CD8-positive, alpha-beta T cell (primary cell): ENCODE measurements at regions of chr11 and their contacts with region 1.

Region 1: GRCh38 chr11:96342961-96343711 is at the start of gene MAML2:
- DNase-seq: peak; percentile 82 to 97 (median 89)
- ATAC-seq: peak; percentile 85
- H3K4me3 ChIP-seq: peak within 1 kb of the TSS; percentile 88 to 98
- H3K4me3 Mint-ChIP-seq: peak within 1 kb of the TSS; percentile 98
- H3K27ac ChIP-seq: peak within 1 kb of the TSS; percentile 66 to 83
- H3K27ac Mint-ChIP-seq: peak within 1 kb of the TSS; percentile 91
- H3K4me1 ChIP-seq: peaks cover 16% of the 10 kb centered on the region
- H3K4me1 Mint-ChIP-seq: peaks cover 39% of the 10 kb centered on the region
- H3K27me3 ChIP-seq: no peaks in the 10 kb centered on the region
- H3K27me3 Mint-ChIP-seq: no peaks in the 10 kb centered on the region
- CTCF ChIP-seq: peak; percentile 88
- total RNA-seq, gene MAML2: 41.2 to 42.3 TPM

Region 2: GRCh38 chr11:96054870-96055705 is 288.0 kb before region 1 on chr11:
- CTCF ChIA-PET with region 1: interaction called, 98 read pairs
- POLR2A ChIA-PET with region 1: interaction called, 24 read pairs
- intact Hi-C with region 1: loop called (anchors 1 to 2 kb)
- DNase-seq: peak in 2 of 9 experiments; percentile 43 to 58
- ATAC-seq: peak; percentile 59
- H3K4me3 ChIP-seq: no peak overlapping the region
- H3K4me3 Mint-ChIP-seq: no peak overlapping the region
- H3K27ac ChIP-seq: no peak overlapping the region
- H3K27ac Mint-ChIP-seq: peak overlapping the region; percentile 58
- H3K4me1 ChIP-seq: peaks cover 16% of the 10 kb centered on the region
- H3K4me1 Mint-ChIP-seq: peaks cover 57% of the 10 kb centered on the region
- H3K27me3 ChIP-seq: no peaks in the 10 kb centered on the region
- H3K27me3 Mint-ChIP-seq: no peaks in the 10 kb centered on the region
- CTCF ChIP-seq: peak; percentile 67

Region 3: DNA sequence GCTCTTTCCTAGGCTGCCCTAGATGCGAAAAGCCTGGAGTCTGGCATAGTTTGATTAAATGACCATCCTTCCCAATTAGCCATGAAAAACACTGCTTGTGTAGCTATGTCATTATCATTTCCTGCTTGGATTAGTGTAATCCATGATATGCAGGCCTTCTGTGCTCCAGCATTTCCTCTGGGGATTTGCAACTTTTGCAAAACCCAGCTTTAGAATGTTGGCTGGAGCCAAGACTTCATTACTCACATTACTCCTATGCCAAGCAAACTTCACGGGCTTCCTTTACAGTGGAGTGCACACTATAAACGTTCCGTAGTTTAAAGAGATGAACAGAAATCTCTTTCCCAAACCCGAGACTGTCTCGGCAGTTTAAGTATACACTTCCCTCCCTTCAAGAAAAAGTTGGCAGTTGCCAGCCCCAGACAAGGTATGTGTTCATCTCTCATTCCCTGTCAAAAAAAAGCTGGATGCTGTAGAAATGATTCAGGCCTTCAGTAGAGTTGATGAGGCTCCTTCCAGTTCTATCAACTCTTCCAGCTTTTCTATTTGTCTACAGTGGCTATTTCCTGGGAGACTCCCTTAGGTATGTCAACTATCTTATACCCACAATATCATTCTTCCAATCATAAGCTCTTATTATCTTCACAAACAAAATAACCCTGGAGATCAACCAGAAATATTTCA is 180.2 kb before region 1 on chr11:
- CTCF ChIA-PET with region 1: interaction called, 10 read pairs
- POLR2A ChIA-PET with region 1: no interaction called
- intact Hi-C with region 1: no loop called
- DNase-seq: no peak
- ATAC-seq: no peak
- H3K4me3 ChIP-seq: no peak overlapping the region
- H3K4me3 Mint-ChIP-seq: no peak overlapping the region
- H3K27ac ChIP-seq: no peak overlapping the region
- H3K27ac Mint-ChIP-seq: peak overlapping the region; percentile 5
- H3K4me1 ChIP-seq: peaks cover 34% of the 10 kb centered on the region
- H3K4me1 Mint-ChIP-seq: peaks cover 70% of the 10 kb centered on the region
- H3K27me3 ChIP-seq: no peaks in the 10 kb centered on the region
- H3K27me3 Mint-ChIP-seq: no peaks in the 10 kb centered on the region
- CTCF ChIP-seq: no peak

Region 4: GRCh38 chr11:96235751-96236150 is 107.4 kb before region 1 on chr11:
- CTCF ChIA-PET with region 1: interaction called, 48 read pairs
- POLR2A ChIA-PET with region 1: no interaction called
- intact Hi-C with region 1: no loop called
- DNase-seq: no peak
- ATAC-seq: peak; percentile 40
- H3K4me3 ChIP-seq: no peak overlapping the region
- H3K4me3 Mint-ChIP-seq: no peak overlapping the region
- H3K27ac ChIP-seq: no peak overlapping the region
- H3K27ac Mint-ChIP-seq: peak overlapping the region; percentile 45
- H3K4me1 ChIP-seq: peaks cover 39% of the 10 kb centered on the region
- H3K4me1 Mint-ChIP-seq: peaks cover 47% of the 10 kb centered on the region
- H3K27me3 ChIP-seq: no peaks in the 10 kb centered on the region
- H3K27me3 Mint-ChIP-seq: no peaks in the 10 kb centered on the region
- CTCF ChIP-seq: no peak

Region 5: GRCh38 chr11:96293598-96294021 is 49.5 kb before region 1 on chr11:
- CTCF ChIA-PET with region 1: interaction called, 5 read pairs
- POLR2A ChIA-PET with region 1: interaction called, 3 read pairs
- intact Hi-C with region 1: loop called in 1 of 2 experiments (anchors 5 kb)
- DNase-seq: peak in 1 of 9 experiments; percentile 45
- ATAC-seq: peak; percentile 31
- H3K4me3 ChIP-seq: no peak overlapping the region
- H3K4me3 Mint-ChIP-seq: peak overlapping the region; percentile 59
- H3K27ac ChIP-seq: peak overlapping the region in 1 of 2 experiments; percentile 24
- H3K27ac Mint-ChIP-seq: peak overlapping the region; percentile 78
- H3K4me1 ChIP-seq: peaks cover 51% of the 10 kb centered on the region
- H3K4me1 Mint-ChIP-seq: peaks cover 81% of the 10 kb centered on the region
- H3K27me3 ChIP-seq: no peaks in the 10 kb centered on the region
- H3K27me3 Mint-ChIP-seq: no peaks in the 10 kb centered on the region
- CTCF ChIP-seq: no peak

Region 6: DNA sequence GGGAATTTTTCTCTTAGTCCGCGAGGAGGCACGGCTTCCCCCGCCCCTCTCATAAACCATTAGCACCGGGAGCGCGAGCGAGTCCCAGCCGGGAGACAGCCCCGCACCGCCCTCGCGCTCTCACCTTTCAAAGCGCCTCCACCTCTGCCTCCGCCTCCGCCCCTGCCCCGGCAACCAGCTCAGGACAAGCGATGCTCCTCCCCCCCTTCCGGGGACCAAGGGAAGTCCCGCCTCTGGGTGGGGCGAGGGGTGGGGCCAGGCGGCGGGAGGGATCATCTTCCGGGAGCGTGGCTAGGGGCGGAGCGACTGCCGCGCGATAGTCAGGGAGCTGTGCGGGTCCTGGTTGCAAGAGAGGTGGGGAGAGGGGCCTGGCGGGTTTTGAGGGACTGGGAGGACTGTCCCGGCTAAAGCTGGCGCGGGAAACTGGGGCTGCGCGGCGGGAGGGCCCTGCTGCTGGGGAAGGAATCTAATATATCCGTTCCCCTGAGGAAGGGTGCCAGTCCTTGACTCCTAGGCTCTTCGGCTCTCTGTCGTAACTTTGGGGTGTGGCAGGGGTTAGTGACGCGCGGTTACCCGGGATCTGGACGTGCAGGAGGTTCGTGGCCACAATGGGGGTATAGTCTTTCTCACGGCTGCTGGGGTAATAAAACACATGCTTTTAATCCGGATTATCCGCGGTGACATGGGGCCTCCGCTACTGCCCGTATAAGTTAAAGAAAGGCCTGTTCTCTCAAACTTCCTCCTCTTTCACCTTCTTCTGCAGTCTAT is 46.8 kb after region 1 on chr11 and contains the starts of genes CCDC82 and JRKL:
- CTCF ChIA-PET with region 1: interaction called, 16 read pairs
- POLR2A ChIA-PET with region 1: no interaction called
- intact Hi-C with region 1: loop called (anchors 1 to 2 kb)
- DNase-seq: peak; percentile 96 to 99 (median 98)
- ATAC-seq: peak; percentile 97
- H3K4me3 ChIP-seq: peak within 1 kb of the TSS; percentile 87 to 93
- H3K4me3 Mint-ChIP-seq: peak within 1 kb of the TSS; percentile 94
- H3K27ac ChIP-seq: peak within 1 kb of the TSS; percentile 78 to 79
- H3K27ac Mint-ChIP-seq: peak within 1 kb of the TSS; percentile 96
- H3K4me1 ChIP-seq: peaks cover 15% of the 10 kb centered on the region
- H3K4me1 Mint-ChIP-seq: peaks cover 52% of the 10 kb centered on the region
- H3K27me3 ChIP-seq: no peaks in the 10 kb centered on the region
- H3K27me3 Mint-ChIP-seq: no peaks in the 10 kb centered on the region
- CTCF ChIP-seq: no peak
- total RNA-seq, gene CCDC82: 20.0 to 23.0 TPM
- total RNA-seq, gene JRKL: 2.5 to 2.6 TPM

Region 7: DNA sequence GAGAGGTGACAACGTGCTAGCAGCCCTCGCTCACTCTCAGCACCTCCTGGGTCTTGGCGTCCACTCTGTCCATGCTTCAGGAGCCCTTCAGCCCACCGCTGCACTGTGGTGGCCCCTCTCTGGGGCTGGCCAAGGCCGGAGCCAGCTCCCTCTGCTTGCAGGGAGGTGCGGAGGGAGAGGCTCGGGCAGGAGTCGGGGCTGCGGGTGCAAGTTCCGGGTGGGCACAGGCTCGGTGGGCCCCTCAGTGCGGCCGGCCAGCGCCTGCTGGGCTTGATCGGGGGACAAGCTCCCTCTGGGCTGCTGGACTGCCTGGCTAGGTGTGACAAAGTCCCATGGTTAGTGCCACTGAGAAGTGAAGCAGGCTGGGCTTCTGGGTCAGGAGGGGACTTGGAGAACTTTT is 292.5 kb after region 1 on chr11:
- CTCF ChIA-PET with region 1: no interaction called
- POLR2A ChIA-PET with region 1: no interaction called
- intact Hi-C with region 1: no loop called
- DNase-seq: no peak
- ATAC-seq: no peak
- H3K4me3 ChIP-seq: no peak overlapping the region
- H3K4me3 Mint-ChIP-seq: no peak overlapping the region
- H3K27ac ChIP-seq: no peak overlapping the region
- H3K27ac Mint-ChIP-seq: no peak overlapping the region
- H3K4me1 ChIP-seq: no peaks in the 10 kb centered on the region
- H3K4me1 Mint-ChIP-seq: no peaks in the 10 kb centered on the region
- H3K27me3 ChIP-seq: no peaks in the 10 kb centered on the region
- H3K27me3 Mint-ChIP-seq: no peaks in the 10 kb centered on the region
- CTCF ChIP-seq: no peak